Natural killer cell (primary cell): ENCODE measurements at regions of chr2 and their contacts with region 1.

Region 1: GRCh38 chr2:130342533-130343275 is at the start of gene IMP4:
- DNase-seq: peak; percentile 88 to 99
- ATAC-seq: peak; percentile 86 to 96 (median 87)
- H3K4me3 ChIP-seq: peak within 1 kb of the TSS; percentile 96
- H3K4me3 Mint-ChIP-seq: peak within 1 kb of the TSS; percentile 99
- H3K27ac ChIP-seq: peak within 1 kb of the TSS; percentile 97
- H3K27ac Mint-ChIP-seq: peak within 1 kb of the TSS; percentile 99 to 100
- H3K4me1 ChIP-seq: peaks cover 17% of the 10 kb centered on the region
- H3K4me1 Mint-ChIP-seq: peaks cover 25 to 42% of the 10 kb centered on the region in 2 donors
- H3K27me3 ChIP-seq: no peaks in the 10 kb centered on the region
- H3K27me3 Mint-ChIP-seq: no peaks in the 10 kb centered on the region
- CTCF ChIP-seq: no peak
- total RNA-seq, gene IMP4: 60.5 to 80.6 (median 72.9) TPM

Region 2: GRCh38 chr2:130181325-130181879 is 161.3 kb before region 1 on chr2 and contains the start of gene SMPD4:
- intact Hi-C with region 1: loop called (anchors 1 kb)
- DNase-seq: peak; percentile 97 to 98
- ATAC-seq: peak; percentile 74 to 88 (median 79)
- H3K4me3 ChIP-seq: peak within 1 kb of the TSS; percentile 65
- H3K4me3 Mint-ChIP-seq: peak within 1 kb of the TSS; percentile 89
- H3K27ac ChIP-seq: peak within 1 kb of the TSS; percentile 82
- H3K27ac Mint-ChIP-seq: peak within 1 kb of the TSS; percentile 87 to 91
- H3K4me1 ChIP-seq: peaks cover 25% of the 10 kb centered on the region
- H3K4me1 Mint-ChIP-seq: peaks cover 16 to 28% of the 10 kb centered on the region in 2 donors
- H3K27me3 ChIP-seq: no peaks in the 10 kb centered on the region
- H3K27me3 Mint-ChIP-seq: no peaks in the 10 kb centered on the region
- CTCF ChIP-seq: no peak
- total RNA-seq, gene SMPD4: 77.8 to 81.8 (median 79.0) TPM

Region 3: GRCh38 chr2:130332271-130333073 is 10.2 kb before region 1 on chr2:
- intact Hi-C with region 1: no loop called
- DNase-seq: peak; percentile 64 to 80
- ATAC-seq: peak; percentile 91 to 99 (median 97)
- H3K4me3 ChIP-seq: no peak overlapping the region
- H3K4me3 Mint-ChIP-seq: no peak overlapping the region
- H3K27ac ChIP-seq: no peak overlapping the region
- H3K27ac Mint-ChIP-seq: no peak overlapping the region
- H3K4me1 ChIP-seq: peaks cover 4% of the 10 kb centered on the region
- H3K4me1 Mint-ChIP-seq: peaks cover 4 to 6% of the 10 kb centered on the region in 2 donors
- H3K27me3 ChIP-seq: peaks cover 8% of the 10 kb centered on the region
- H3K27me3 Mint-ChIP-seq: peaks cover 30 to 46% of the 10 kb centered on the region in 2 donors
- CTCF ChIP-seq: peak; percentile 93

Region 4: DNA sequence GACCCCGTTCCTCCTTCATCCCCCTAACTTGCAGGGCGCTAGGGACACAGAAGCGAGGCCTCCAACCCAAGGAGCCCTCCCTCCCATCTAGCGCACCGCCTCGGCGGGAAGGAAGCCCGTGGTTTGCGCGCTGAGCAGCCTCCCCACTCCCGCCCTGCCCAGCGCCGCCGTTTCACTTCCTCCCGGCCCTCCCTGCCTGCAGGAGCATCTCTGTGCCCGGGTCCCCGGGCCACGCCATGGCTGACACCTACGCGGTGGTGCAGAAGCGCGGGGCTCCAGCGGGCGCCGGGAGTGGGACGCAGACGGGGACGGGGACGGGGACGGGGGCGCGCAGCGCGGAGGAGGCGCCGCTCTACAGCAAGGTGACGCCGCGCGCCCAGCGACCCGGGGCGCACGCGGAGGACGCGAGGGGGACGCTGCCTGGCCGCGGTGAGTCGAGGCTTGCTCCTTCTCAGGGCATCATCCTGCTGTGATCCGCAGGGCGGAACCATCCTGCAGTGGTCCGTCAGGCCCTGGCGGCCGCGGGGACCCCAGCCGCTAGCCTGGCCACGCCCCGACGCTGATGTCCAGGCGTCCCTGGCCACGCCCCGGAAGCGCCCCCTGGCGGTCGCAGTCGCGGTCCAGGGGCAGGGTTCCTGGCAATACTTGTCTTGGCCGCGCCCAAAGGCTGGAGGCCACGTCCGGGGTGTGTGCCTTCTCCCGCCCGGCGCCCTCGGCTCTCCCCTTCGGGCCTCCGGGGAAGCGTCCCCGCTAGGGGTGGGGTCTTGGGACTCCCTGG is 29.5 kb after region 1 on chr2:
- intact Hi-C with region 1: loop called (anchors 2 kb)
- DNase-seq: peak; percentile 63 to 82
- ATAC-seq: peak; percentile 73 to 85 (median 83)
- H3K4me3 ChIP-seq: peak overlapping the region; percentile 64
- H3K4me3 Mint-ChIP-seq: peak overlapping the region; percentile 87
- H3K27ac ChIP-seq: peak overlapping the region; percentile 76
- H3K27ac Mint-ChIP-seq: peak overlapping the region; percentile 95
- H3K4me1 ChIP-seq: peaks cover 67% of the 10 kb centered on the region
- H3K4me1 Mint-ChIP-seq: peaks cover 66 to 73% of the 10 kb centered on the region in 2 donors
- H3K27me3 ChIP-seq: no peaks in the 10 kb centered on the region
- H3K27me3 Mint-ChIP-seq: no peaks in the 10 kb centered on the region
- CTCF ChIP-seq: peak; percentile 64